Thyroid gland (tissue), 4 donors: ENCODE measurements at regions of chr11 and their contacts with region 1.

Region 1: DNA sequence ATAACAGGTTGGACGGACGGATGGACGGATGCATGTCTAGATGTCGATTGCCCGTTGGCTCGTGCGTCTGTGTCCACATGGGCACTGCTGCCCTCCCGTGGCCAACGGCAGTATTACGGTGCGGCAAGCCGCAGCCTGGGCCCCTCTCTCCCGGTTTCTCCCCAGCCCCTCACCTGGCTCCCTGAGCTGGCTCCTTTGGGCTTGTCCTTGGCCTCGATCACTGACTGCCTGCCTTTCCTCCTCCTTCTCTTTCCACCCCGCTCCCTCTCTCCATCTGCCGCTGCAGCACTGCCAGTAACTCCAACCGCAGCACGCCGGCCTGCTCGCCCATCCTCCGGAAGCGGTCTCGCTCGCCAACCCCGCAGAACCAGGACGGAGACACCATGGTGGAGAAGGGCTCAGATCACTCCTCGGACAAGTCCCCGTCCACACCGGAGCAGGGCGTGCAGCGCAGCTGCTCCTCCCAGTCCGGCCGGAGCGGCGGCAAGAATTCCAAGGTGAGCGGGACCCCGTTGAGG is 77.3 kb downstream of the SCN3B start:
- DNase-seq: peak; percentile 73 to 74
- H3K4me3 ChIP-seq: no peak overlapping the region
- H3K27ac ChIP-seq: no peak overlapping the region
- H3K4me1 ChIP-seq: peaks cover 0 to 4% of the 10 kb centered on the region in 2 donors
- H3K27me3 ChIP-seq: no peaks in the 10 kb centered on the region
- CTCF ChIP-seq: peak; percentile 86 to 94 (median 90)
- POLR2A ChIP-seq: no peak

Region 2: GRCh38 chr11:123511037-123511870 is 65.9 kb before region 1 on chr11:
- intact Hi-C with region 1: loop called (anchors 5 kb)
- DNase-seq: peak; percentile 92 to 93
- H3K4me3 ChIP-seq: no peak overlapping the region
- H3K27ac ChIP-seq: peak overlapping the region in 1 of 3 donors; percentile 37
- H3K4me1 ChIP-seq: peaks cover 2 to 35% of the 10 kb centered on the region in 2 donors
- H3K27me3 ChIP-seq: no peaks in the 10 kb centered on the region
- CTCF ChIP-seq: peak; percentile 66 to 92 (median 86)
- POLR2A ChIP-seq: no peak

Region 3: GRCh38 chr11:123640677-123641494 is 63.7 kb after region 1 on chr11:
- intact Hi-C with region 1: no loop called
- DNase-seq: peak; percentile 44 to 47
- H3K4me3 ChIP-seq: no peak overlapping the region
- H3K27ac ChIP-seq: no peak overlapping the region
- H3K4me1 ChIP-seq: no peaks in the 10 kb centered on the region
- H3K27me3 ChIP-seq: no peaks in the 10 kb centered on the region
- CTCF ChIP-seq: peak; percentile 29 to 88 (median 76)
- POLR2A ChIP-seq: no peak